Dendritic cell treated with granulocyte-macrophage colony-stimulating factor and Interleukin-4, amounts not matched to agents 40 ng/mL and 50 ng/mL, for 4 days (primary cell): ENCODE measurements at regions of chr6 and their contacts with region 1.

Region 1: DNA sequence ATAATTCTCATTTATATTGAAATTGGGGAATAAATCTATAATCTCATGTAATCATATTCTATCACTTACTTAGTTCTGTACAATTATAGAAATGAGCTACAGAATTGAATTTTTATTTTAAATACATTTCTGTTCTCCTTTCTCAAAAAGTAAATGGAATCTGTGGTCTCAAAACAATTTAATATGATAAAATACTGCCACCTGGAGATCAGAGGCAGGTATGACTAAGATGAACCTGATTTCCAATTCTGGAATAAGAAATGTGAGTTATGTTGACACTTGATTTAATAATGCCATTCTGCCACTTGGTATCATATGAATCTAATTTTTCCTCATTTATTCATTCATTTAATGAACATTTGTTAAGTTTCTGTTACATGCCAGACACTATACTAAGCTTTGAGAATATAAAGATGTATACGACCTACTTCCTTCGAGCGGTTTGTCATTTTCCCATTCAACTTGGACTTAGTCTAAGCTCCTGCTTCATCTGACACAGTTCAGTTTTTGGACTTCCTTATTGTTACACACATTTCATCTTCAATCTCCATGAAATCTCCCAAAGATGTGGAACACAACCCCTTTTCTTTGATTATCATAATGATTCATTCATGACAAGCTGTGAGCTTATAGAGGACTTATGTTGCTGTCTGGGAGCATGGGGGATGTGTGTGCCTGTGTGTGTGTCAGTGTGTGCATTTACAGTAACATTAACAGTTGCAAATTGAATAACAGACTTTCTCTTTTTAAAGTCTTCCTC is 7.5 kb upstream of the CCDC28A start:
- H3K4me3 Mint-ChIP-seq: no peak overlapping the region
- H3K27ac Mint-ChIP-seq: peak overlapping the region; percentile 5
- H3K4me1 Mint-ChIP-seq: peaks cover 6% of the 10 kb centered on the region
- H3K27me3 Mint-ChIP-seq: no peaks in the 10 kb centered on the region

Region 2: GRCh38 chr6:138115877-138116660 is 650.0 kb before region 1 on chr6:
- intact Hi-C with region 1: loop called (anchors 5 kb)
- H3K4me3 Mint-ChIP-seq: no peak overlapping the region
- H3K27ac Mint-ChIP-seq: no peak overlapping the region
- H3K4me1 Mint-ChIP-seq: peaks cover 7% of the 10 kb centered on the region
- H3K27me3 Mint-ChIP-seq: peaks cover 26% of the 10 kb centered on the region

Region 3: GRCh38 chr6:138428944-138429598 is 337.0 kb before region 1 on chr6:
- intact Hi-C with region 1: loop called (anchors 2 kb)
- H3K4me3 Mint-ChIP-seq: no peak overlapping the region
- H3K27ac Mint-ChIP-seq: no peak overlapping the region
- H3K4me1 Mint-ChIP-seq: peaks cover 43% of the 10 kb centered on the region
- H3K27me3 Mint-ChIP-seq: peaks cover 2% of the 10 kb centered on the region

Region 4: DNA sequence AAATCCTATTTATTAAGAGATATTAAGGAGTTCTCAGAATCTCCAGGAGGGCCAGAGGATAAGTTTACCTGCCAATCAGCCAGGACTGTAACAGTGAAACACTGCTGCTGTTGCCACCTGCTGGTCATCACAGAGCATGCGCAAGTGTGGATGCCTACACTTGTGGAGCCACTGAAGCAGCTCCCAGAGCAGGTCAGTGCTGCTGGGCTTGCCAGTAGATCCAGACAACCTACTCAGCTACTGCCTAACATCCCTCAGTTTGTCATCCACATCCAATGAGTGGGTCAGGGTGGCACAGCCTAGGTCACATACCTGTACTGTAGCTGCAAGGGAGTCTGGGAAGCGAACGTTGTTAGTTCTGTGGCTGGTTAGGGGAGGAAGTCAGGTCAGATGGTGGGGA is 248.4 kb before region 1 on chr6:
- intact Hi-C with region 1: loop called (anchors 5 kb)
- H3K4me3 Mint-ChIP-seq: no peak overlapping the region
- H3K27ac Mint-ChIP-seq: no peak overlapping the region
- H3K4me1 Mint-ChIP-seq: peaks cover 20% of the 10 kb centered on the region
- H3K27me3 Mint-ChIP-seq: no peaks in the 10 kb centered on the region

Region 5: GRCh38 chr6:138588805-138589434 is 177.2 kb before region 1 on chr6:
- intact Hi-C with region 1: loop called (anchors 1 kb)
- H3K4me3 Mint-ChIP-seq: no peak overlapping the region
- H3K27ac Mint-ChIP-seq: no peak overlapping the region
- H3K4me1 Mint-ChIP-seq: peaks cover 42% of the 10 kb centered on the region
- H3K27me3 Mint-ChIP-seq: peaks cover 13% of the 10 kb centered on the region

Region 6: DNA sequence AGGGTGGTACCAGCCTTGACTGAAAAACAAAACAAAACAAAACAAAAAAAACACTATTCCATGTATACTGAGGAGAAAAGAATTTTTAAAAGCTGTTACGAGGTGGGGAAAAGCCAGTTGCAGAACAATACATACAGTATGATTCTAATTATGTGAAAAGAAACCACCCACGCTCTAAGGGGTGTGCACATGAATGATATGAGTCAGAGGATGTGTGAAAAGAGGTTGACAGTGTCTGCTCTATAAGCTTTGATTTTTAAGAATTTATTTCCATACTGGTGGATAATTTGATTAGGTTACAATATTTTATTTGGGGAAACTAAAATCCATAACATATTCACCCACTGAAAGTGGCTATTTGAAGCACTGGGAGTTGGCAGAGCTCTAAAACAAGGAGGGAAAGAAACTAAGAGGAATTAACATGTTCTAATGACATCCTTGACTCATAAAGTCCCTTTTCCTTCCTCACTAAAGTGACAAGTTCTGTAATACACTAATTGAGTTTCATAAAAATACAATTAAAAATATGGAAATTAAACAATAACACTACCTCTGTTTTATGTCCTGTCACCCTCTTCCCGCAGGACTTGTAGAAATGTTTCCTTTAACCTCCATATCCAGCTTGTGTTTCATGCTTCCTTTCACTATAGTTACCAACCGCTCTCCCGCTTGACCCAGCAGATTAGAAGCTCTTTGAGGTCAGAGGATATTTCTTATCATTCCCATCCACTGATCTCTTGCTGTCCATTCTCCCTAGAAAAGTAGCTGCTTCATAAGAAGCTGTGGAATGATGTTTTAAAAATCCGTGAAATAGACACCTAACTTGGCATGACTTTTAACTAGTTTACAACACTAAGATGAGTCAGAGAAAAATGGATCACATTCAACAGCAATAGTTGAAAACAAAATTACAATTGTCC is 111.1 kb before region 1 on chr6:
- intact Hi-C with region 1: no loop called
- H3K4me3 Mint-ChIP-seq: no peak overlapping the region
- H3K27ac Mint-ChIP-seq: peak overlapping the region; percentile 17
- H3K4me1 Mint-ChIP-seq: peaks cover 33% of the 10 kb centered on the region
- H3K27me3 Mint-ChIP-seq: no peaks in the 10 kb centered on the region

Region 7: DNA sequence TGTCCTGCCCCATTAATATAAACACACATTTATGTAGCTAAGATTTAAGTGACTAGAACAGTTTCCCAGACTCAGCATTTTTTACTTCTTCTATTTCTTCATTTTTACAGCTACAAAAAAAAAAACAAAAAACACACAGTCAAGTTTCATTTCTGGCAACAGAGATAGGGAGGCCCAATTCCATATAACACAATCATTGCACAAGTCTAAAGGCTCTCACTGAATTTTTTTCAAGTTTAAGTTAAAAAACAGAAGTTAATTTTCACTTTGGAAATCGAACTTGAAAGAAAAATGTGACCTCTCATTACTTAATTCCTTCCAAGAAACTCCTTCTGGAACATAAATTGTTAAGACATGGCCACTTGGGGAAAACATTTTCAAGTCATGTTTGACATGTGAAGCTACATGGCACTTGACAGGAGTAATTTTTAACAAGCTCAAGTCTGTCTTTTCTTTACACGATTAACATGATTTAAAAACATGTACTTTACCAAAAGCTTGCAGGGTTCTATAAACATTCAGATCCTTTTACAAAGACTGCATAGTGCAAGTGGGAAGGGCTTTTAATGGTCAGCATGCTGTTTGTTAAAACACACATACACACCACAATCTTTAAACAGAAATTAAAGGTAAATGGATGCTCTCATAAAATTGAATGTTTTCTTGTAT is 92.6 kb before region 1 on chr6:
- intact Hi-C with region 1: loop called (anchors 5 kb)
- H3K4me3 Mint-ChIP-seq: peak overlapping the region; percentile 23
- H3K27ac Mint-ChIP-seq: peak overlapping the region; percentile 84
- H3K4me1 Mint-ChIP-seq: peaks cover 59% of the 10 kb centered on the region
- H3K27me3 Mint-ChIP-seq: no peaks in the 10 kb centered on the region

Region 8: GRCh38 chr6:138692058-138692977 is 73.8 kb before region 1 on chr6:
- intact Hi-C with region 1: loop called (anchors 2 kb)
- H3K4me3 Mint-ChIP-seq: peak overlapping the region; percentile 99
- H3K27ac Mint-ChIP-seq: peak overlapping the region; percentile 92
- H3K4me1 Mint-ChIP-seq: peaks cover 18% of the 10 kb centered on the region
- H3K27me3 Mint-ChIP-seq: peaks cover 27% of the 10 kb centered on the region